SK-N-SH (cell line): ENCODE measurements at regions of chr20 and their contacts with region 1.

Region 1: DNA sequence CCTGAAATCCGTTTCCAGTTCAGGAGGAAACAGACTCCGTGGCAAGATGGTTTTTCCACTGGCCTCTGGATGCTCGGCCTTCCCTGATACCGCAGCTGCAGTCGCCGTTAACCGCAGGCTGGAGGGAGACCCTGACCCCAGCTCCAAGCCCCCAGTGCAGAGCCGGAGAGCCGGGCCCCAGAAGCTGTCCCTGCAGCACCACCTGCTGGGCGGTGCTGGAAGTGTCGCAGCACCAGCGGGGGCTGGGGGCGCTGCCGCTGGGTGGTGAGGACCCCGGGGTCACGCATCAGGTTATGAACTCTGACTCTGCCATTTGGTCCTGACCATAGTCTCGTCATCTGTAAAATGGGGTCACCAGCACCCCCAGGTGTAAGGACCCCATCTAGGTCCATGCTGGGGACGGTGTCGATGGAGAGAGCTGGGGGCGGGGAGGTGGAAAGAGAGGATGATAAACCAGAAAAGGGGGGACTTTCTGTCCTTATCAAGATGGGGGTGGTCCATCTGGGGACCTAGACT is 20.7 kb upstream of the CHRNA4 start:
- DNase-seq: peak; percentile 94
- H3K4me3 ChIP-seq: peak overlapping the region in 1 of 2 experiments; percentile 57; a peak in 1 of 4 replicates
- H3K27ac ChIP-seq: no peak overlapping the region
- H3K4me1 ChIP-seq: no peaks in the 10 kb centered on the region; a peak in 1 of 4 replicates
- H3K27me3 ChIP-seq: no peaks in the 10 kb centered on the region
- CTCF ChIP-seq: peak; percentile 79
- EP300 ChIP-seq: no peak
- RAD21 ChIP-seq: peak; percentile 87

Region 2: GRCh38 chr20:63223221-63224207 is 158.4 kb before region 1 on chr20:
- CTCF ChIA-PET with region 1: interaction called, 52 read pairs
- POLR2A ChIA-PET with region 1: no interaction called
- DNase-seq: peak; percentile 76
- H3K4me3 ChIP-seq: no peak overlapping the region; a peak in 1 of 4 replicates
- H3K27ac ChIP-seq: no peak overlapping the region
- H3K4me1 ChIP-seq: peaks cover 0 to 17% of the 10 kb centered on the region in 2 experiments; a peak in 1 of 4 replicates
- H3K27me3 ChIP-seq: 0 out of 2 replicates have a peak, but pooled peaks cover 6% of the 10 kb centered on the region
- CTCF ChIP-seq: peak; percentile 81
- EP300 ChIP-seq: no peak
- RAD21 ChIP-seq: peak; percentile 70

Region 3: GRCh38 chr20:63301671-63302070 is 80.2 kb before region 1 on chr20:
- CTCF ChIA-PET with region 1: interaction called, 460 read pairs
- POLR2A ChIA-PET with region 1: no interaction called
- DNase-seq: no peak
- H3K4me3 ChIP-seq: no peak overlapping the region
- H3K27ac ChIP-seq: no peak overlapping the region
- H3K4me1 ChIP-seq: no peaks in the 10 kb centered on the region
- H3K27me3 ChIP-seq: peaks cover 33% of the 10 kb centered on the region
- CTCF ChIP-seq: no peak
- EP300 ChIP-seq: no peak
- RAD21 ChIP-seq: no peak

Region 4: DNA sequence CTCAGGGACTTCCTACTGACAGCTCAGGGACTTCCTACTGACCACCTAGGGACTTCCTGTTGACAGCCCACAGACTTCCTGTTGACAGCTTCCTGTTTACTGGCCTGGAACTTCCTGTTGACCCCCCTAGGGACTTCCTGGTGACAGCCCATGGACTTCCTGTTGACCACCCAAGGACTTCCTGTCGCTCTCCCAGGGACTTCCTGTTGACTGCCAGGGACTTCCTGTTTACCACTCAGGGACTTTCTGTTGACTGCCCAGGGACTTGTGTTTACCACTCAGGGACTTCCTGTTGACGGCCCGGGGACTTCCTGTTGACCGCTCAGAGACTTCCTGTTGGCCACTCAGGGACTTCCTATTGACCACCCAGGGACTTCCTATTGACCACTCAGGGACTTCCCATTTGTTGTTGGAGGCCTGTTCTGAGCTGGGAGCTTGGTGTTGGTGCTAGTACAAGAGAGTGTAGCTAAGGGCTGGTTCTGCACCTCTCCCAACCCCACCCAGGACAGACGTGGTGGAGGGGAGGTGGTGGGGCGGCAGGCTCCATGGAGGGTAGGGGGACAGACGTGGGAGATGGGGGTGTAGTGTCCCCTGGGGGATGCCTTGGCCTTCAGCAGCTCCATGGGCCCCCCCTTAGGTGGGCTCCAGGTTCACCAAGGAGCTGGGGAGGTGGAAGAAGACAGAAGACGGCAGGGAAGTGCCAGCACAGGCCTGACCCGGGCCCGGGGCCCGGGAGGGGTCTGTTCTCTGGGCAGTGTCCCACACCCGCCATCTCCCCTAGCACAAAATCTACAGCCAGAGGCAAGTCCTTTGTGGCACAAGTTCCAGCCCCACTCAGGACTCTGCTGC is 54.7 kb before region 1 on chr20:
- CTCF ChIA-PET with region 1: interaction called, 15 read pairs
- POLR2A ChIA-PET with region 1: no interaction called
- DNase-seq: no peak
- H3K4me3 ChIP-seq: no peak overlapping the region
- H3K27ac ChIP-seq: no peak overlapping the region
- H3K4me1 ChIP-seq: peaks cover 0 to 3% of the 10 kb centered on the region in 2 experiments; a peak in 1 of 4 replicates
- H3K27me3 ChIP-seq: no peaks in the 10 kb centered on the region; the same call in 1 of the 2 replicates
- CTCF ChIP-seq: no peak
- EP300 ChIP-seq: no peak
- RAD21 ChIP-seq: no peak

Region 5: DNA sequence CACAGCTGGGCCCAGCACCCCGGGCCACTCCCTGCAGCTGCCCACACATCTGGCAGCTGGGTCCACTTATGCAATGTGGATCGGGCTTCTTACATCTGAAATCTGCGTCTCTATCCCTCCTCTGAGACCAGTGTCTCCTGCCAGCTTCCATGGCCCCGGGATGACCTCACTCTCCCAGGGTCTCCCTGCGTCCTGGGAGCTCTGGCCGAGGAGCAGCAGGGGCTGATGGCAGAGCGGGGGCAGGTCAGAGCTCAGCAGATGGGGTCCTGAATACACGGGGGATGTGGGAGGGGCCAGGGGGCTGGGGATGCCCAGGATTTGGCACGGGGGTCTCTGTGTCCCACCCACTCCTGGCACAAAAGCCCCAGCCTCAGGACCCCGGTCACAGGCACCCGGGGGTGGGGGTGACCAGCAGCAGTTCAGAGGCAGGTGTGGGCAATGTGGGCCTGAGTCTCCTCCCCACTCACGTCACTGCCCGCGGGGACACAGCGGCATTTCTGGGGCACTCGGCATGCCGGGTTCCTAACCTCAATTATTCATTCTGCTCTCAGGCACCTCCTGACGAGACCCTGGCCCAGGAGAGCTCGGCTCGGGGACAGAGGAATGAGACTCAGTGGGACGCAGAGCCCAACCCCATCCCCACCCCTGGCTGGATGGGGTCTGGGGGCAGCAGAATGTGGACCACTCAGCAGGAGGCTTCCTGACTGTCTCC is 37.1 kb before region 1 on chr20:
- CTCF ChIA-PET with region 1: interaction called, 14 read pairs
- POLR2A ChIA-PET with region 1: no interaction called
- DNase-seq: peak; percentile 67
- H3K4me3 ChIP-seq: no peak overlapping the region
- H3K27ac ChIP-seq: no peak overlapping the region
- H3K4me1 ChIP-seq: peaks cover 0 to 14% of the 10 kb centered on the region in 2 experiments; a peak in 1 of 4 replicates
- H3K27me3 ChIP-seq: no peaks in the 10 kb centered on the region
- CTCF ChIP-seq: no peak
- EP300 ChIP-seq: no peak
- RAD21 ChIP-seq: no peak

Region 6: DNA sequence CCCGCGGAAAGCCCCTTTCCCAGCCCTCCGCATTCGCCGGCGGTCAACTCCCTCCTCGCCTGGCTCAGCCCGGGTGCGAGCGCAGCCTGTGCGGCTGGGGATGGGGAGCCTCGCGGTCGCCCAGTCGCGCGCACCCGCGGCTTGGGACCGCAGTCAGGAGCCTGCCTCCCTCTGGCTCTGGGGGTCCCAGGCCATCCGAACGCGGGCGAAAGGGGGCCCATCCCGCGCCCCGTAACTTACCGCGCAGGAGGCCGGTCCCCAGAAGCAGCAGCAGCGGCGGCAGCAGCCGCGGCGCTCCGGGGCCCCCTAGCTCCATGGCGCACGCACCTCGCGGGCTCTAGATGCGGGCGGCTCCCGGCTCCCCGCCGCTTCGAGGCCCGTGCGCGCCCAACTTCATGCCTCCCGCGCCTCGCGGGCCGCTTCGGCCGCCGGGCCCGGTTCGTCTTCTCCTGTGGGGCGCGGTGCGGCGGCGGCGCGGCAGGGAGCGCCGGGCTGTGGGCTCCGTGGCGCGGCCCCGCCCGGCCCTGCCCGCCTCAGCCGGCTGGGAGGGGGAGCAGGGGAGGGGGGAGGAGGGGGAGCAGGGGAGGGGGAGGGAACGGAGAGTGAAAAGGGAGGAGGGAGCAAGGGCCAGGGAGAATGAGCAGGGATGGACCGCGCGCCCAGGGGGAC is 20.9 kb before region 1 on chr20 and contains the start of gene CHRNA4:
- CTCF ChIA-PET with region 1: interaction called, 39 read pairs
- POLR2A ChIA-PET with region 1: no interaction called
- DNase-seq: peak; percentile 68
- H3K4me3 ChIP-seq: no peak within 1 kb of the TSS
- H3K27ac ChIP-seq: no peak within 1 kb of the TSS
- H3K4me1 ChIP-seq: no peaks in the 10 kb centered on the region; a peak in 1 of 4 replicates
- H3K27me3 ChIP-seq: no peaks in the 10 kb centered on the region
- CTCF ChIP-seq: no peak
- EP300 ChIP-seq: no peak
- RAD21 ChIP-seq: no peak
- polyA plus RNA-seq, gene CHRNA4: not detected in 2 replicates

Region 7: GRCh38 chr20:63394069-63394919 is 12.4 kb after region 1 on chr20:
- CTCF ChIA-PET with region 1: interaction called, 92 read pairs
- POLR2A ChIA-PET with region 1: no interaction called
- DNase-seq: no peak
- H3K4me3 ChIP-seq: no peak overlapping the region
- H3K27ac ChIP-seq: no peak overlapping the region
- H3K4me1 ChIP-seq: no peaks in the 10 kb centered on the region; a peak in 1 of 4 replicates
- H3K27me3 ChIP-seq: peaks cover 36% of the 10 kb centered on the region
- CTCF ChIP-seq: no peak
- EP300 ChIP-seq: no peak
- RAD21 ChIP-seq: no peak